ENCODE measurements at regions of chr10 and their contacts with region 1.

Region 1: DNA sequence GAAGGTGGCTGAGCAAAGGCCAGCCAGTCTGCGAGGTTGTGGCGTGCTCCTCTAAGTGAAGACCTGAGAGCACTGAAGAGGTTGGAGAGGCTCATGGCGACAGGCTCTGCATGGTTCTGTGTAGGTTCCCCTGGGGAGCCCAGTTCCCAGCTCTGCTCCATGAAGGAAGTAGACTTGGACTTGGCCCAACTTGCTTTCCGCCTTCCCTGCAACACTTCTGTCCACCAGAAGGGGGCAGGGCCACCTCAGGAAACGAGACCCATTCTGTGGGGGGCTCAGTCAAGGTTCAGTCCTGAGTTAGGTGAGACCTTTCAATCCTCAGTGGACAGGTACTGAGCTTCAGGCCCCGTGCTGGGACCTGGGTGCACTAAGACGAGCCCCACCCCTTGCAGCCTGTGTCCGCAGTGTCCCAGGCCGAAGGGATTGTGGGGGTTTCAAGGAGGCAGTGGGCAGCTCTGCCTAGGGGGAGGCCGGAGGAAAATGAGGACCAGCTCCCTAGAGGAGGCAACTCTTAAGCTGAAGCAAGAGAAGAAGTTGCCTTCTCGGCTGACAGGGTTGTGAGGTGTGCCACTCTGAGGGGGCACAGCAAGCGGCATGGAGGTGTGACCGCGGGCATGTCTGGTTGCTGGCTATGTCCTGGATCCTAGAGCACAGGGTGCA is 15.0 kb upstream of the PCBD1 start:
- H3K4me3 ChIP-seq: no peak overlapping the region
- H3K27ac ChIP-seq: no peak overlapping the region
- H3K4me1 ChIP-seq: no peaks in the 10 kb centered on the region
- CTCF ChIP-seq: peak; percentile 83

Region 2: GRCh38 chr10:70804421-70804808 is 99.0 kb before region 1 on chr10:
- CTCF ChIA-PET with region 1: no interaction called
- POLR2A ChIA-PET with region 1: no interaction called
- H3K4me3 ChIP-seq: no peak overlapping the region
- H3K27ac ChIP-seq: no peak overlapping the region
- H3K4me1 ChIP-seq: no peaks in the 10 kb centered on the region
- CTCF ChIP-seq: no peak

Region 3: DNA sequence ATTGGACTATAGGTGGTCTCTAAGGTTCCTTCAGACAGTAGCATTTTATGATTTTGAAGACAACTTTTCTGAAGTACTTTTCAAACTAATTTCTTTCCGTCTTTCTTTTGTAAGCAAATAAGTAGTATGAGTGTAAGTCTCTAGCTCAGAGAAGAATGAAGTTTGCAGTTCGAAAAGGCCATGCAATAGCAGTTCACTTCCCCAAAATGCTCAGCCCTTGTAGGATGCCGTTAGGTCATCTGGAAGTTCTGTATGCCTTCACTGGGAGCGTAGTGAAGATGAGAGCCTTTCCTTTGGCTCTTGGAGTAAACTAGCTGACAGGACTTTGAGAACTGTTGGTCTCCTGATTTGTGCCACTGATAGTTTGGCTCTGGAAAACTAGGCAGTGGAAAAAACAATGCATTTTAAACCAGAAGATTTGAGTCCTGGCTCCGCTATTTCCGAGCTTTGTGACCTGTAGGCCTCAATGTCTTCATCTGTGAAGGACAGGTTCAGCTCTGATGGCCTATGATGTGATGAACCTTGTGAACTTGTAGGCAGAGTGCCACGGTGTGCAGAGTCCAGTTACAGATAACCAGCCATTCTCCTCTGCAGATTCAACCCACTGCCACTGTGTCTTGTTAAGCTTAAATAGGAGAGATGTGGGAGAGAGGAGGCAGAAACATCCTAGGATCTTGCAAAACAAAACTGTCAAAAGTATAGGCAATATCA is 68.8 kb before region 1 on chr10:
- CTCF ChIA-PET with region 1: no interaction called
- POLR2A ChIA-PET with region 1: no interaction called
- H3K4me3 ChIP-seq: no peak overlapping the region
- H3K27ac ChIP-seq: no peak overlapping the region
- H3K4me1 ChIP-seq: no peaks in the 10 kb centered on the region; the same call in 1 of the 2 replicates
- CTCF ChIP-seq: no peak

Region 4: GRCh38 chr10:70887804-70888800 is 15.3 kb before region 1 on chr10 and contains the start of gene PCBD1:
- CTCF ChIA-PET with region 1: interaction called, 19 read pairs
- POLR2A ChIA-PET with region 1: interaction called, 3 read pairs
- H3K4me3 ChIP-seq: peak within 1 kb of the TSS; percentile 50
- H3K27ac ChIP-seq: peak within 1 kb of the TSS; percentile 55
- H3K4me1 ChIP-seq: peaks cover 4% of the 10 kb centered on the region
- CTCF ChIP-seq: no peak

Region 5: DNA sequence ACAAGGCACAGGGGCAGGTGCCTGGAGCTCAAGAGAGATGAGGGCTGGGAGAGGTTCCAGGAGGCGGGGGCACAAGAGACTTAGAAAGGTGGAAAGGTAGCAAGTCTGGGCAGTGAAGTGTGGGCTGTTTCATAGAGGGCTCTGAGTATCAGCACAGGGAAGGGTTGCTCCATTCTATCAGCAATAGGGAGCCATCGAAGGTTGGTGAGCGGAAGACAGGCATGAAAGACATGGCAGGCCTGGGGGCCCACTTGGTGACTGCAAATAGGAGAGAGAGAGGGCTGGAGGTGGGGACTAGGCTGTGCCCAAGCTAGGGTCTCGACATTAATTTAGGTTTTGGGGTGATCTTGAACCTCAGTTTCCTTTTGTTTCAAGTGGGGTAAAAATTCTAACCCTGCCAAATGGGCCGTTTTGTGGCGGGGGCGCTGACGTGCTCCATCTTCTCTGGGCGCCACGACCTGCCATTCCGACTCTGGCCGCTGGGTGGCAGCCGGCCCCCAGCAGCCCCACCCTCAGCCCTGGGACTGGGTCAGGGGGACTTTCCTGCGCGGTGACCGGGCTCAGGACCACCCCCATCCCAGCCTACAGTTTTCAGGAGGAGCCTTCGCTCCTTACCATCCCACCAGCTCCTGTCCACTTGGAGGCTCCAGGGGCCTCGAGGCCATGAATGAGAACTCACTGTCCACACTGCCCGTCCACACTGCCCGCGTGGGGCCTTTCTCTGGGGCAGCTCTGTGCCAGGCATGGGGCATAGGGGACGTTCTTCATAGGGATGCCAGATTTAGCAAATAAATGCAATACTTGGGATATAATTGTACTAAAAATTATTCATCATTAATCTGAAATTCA is 22.2 kb after region 1 on chr10:
- CTCF ChIA-PET with region 1: interaction called, 29 read pairs
- POLR2A ChIA-PET with region 1: no interaction called
- H3K4me3 ChIP-seq: no peak overlapping the region
- H3K27ac ChIP-seq: no peak overlapping the region
- H3K4me1 ChIP-seq: peaks cover 8% of the 10 kb centered on the region; the same call in 1 of the 2 replicates
- CTCF ChIP-seq: peak; percentile 89

Region 6: GRCh38 chr10:71069909-71070666 is 166.7 kb after region 1 on chr10:
- CTCF ChIA-PET with region 1: no interaction called
- POLR2A ChIA-PET with region 1: no interaction called
- H3K4me3 ChIP-seq: no peak overlapping the region
- H3K27ac ChIP-seq: no peak overlapping the region
- H3K4me1 ChIP-seq: peaks cover 5% of the 10 kb centered on the region; the same call in 1 of the 2 replicates
- CTCF ChIP-seq: no peak

Region 7: GRCh38 chr10:71278691-71279588 is 375.5 kb after region 1 on chr10:
- CTCF ChIA-PET with region 1: interaction called, 64 read pairs
- POLR2A ChIA-PET with region 1: no interaction called
- H3K4me3 ChIP-seq: no peak overlapping the region
- H3K27ac ChIP-seq: no peak overlapping the region
- H3K4me1 ChIP-seq: no peaks in the 10 kb centered on the region
- CTCF ChIP-seq: no peak

Measured in HEK293 (cell line).